Pancreas (tissue), 10 donors: ENCODE measurements at regions of chr15 and their contacts with region 1.

Region 1: GRCh38 chr15:81400640-81401236 is 26.7 kb upstream of the TMC3 start:
- DNase-seq: no peak
- ATAC-seq: peak in 3 of 4 donors; percentile 62 to 75 (median 70)
- H3K4me3 ChIP-seq: no peak overlapping the region
- H3K27ac ChIP-seq: no peak overlapping the region
- H3K4me1 ChIP-seq: no peaks in the 10 kb centered on the region
- H3K27me3 ChIP-seq: no peaks in the 10 kb centered on the region
- CTCF ChIP-seq: peak; percentile 23 to 75 (median 48)

Region 2: GRCh38 chr15:81274931-81275707 is 125.6 kb before region 1 on chr15:
- intact Hi-C with region 1: loop called (anchors 5 to 10 kb)
- DNase-seq: peak; percentile 62 to 86 (median 76)
- ATAC-seq: peak; percentile 85 to 98 (median 94)
- H3K4me3 ChIP-seq: no peak overlapping the region
- H3K27ac ChIP-seq: peak overlapping the region in 1 of 4 donors; percentile 21
- H3K4me1 ChIP-seq: peaks cover 0 to 8% (median 3%) of the 10 kb centered on the region in 3 donors
- H3K27me3 ChIP-seq: no peaks in the 10 kb centered on the region
- CTCF ChIP-seq: peak; percentile 68 to 83 (median 75)

Region 3: GRCh38 chr15:81286621-81287121 is 114.1 kb before region 1 on chr15:
- intact Hi-C with region 1: loop called in 2 of 3 experiments (anchors 5 to 10 kb)
- DNase-seq: no peak
- ATAC-seq: peak in 1 of 4 donors; percentile 56
- H3K4me3 ChIP-seq: no peak overlapping the region
- H3K27ac ChIP-seq: no peak overlapping the region
- H3K4me1 ChIP-seq: no peaks in the 10 kb centered on the region
- H3K27me3 ChIP-seq: no peaks in the 10 kb centered on the region
- CTCF ChIP-seq: no peak